Activated T-helper 1 cell treated with anti-CD3 and anti-CD28 coated beads, Interleukin-12 subunit alpha, Interleukin-12 subunit beta, Interleukin-2, Interleukin-4 antibody, amounts not matched to agents 30 ng/mL and 10 ng/mL and 1 ng/mL, durations not matched to agents 14 hours and 24 hours and 36 hours (primary cell): ENCODE measurements at regions of chr1 and their contacts with region 1.

Region 1: GRCh38 chr1:3491291-3492246 is 37.1 kb downstream of the ARHGEF16 start:
- DNase-seq: peak; percentile 70
- H3K4me3 Mint-ChIP-seq: no peak overlapping the region
- H3K27ac Mint-ChIP-seq: no peak overlapping the region
- H3K4me1 Mint-ChIP-seq: no peaks in the 10 kb centered on the region
- H3K27me3 Mint-ChIP-seq: no peaks in the 10 kb centered on the region

Region 2: DNA sequence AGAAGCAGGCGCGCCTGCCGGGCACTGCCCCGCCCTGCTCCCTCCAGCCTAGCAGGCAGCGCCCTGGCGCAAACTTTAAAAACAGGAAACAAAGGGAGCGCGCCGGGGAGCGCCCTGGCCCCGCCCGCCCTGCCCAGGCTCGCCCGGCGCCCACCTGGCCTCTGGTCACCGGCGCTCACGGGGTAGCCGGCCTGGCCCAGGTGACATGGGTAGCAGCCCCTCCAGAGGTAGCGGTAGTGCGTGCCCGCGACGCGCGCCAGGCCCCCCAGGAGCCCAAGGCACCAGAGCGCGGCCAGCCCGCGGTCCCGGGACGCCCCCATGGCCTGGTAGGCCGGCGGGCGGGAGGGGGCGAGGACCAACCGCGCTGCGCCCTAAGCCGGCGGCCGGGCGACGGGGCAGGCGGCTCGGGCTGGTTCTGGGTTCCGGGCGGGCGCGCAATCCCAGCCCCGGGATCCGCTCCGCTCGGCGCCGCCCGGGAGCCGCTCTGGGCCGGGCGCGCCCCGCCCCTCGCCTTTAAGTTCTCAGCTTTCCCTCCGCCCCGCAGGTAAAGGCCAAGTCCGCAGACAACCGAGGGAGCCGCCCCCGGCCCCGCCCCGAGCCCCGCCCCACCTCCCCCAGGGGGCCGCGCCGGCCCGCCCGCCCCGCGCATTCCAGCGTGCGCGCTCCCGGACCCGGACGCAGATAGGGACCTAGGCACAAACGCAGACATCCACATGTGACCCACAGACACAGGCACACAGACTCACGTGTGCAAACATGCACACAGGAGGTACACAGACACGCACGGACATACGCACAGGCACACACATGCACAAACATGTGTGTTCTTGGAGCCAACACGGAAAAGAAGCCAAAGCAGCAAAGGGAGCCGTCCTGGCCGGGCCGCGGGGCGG is 39.6 kb after region 1 on chr1:
- intact Hi-C with region 1: loop called (anchors 2 kb)
- DNase-seq: peak; percentile 63
- H3K4me3 Mint-ChIP-seq: peak overlapping the region; percentile 78
- H3K27ac Mint-ChIP-seq: peak overlapping the region; percentile 87
- H3K4me1 Mint-ChIP-seq: no peaks in the 10 kb centered on the region
- H3K27me3 Mint-ChIP-seq: peaks cover 2% of the 10 kb centered on the region

Region 3: DNA sequence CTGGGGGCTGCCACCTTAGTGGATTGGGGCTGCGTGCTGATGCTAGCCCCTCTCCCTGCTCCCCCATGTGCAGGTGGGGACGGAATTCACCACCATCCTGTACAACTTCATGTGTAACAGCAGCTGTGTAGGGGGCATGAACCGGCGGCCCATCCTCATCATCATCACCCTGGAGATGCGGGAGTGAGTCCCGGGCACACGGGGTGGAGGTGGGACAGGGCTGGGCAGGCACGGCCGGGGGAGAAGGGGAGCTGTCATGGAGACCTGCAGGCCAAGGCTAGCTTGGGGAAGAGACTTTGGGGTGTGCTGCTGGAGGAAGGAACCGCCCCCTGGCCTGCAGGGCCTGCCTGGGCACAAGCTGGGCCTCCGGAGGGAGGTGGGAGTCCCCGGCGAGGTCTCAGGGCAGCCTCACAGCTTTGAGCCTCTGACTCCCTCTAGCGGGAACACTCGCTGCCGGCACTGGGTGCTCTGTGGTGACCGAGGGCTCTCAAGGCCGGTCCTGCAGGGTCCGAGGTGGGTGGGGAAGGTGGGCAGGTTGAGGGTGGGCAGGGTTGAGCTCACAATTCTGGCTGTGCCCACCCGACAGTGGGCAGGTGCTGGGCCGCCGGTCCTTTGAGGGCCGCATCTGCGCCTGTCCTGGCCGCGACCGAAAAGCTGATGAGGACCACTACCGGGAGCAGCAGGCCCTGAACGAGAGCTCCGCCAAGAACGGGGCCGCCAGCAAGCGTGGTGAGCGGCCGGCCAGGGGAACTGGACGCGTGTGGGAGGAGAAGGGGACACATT is 235.7 kb after region 1 on chr1:
- intact Hi-C with region 1: loop called (anchors 1 kb)
- DNase-seq: no peak
- H3K4me3 Mint-ChIP-seq: no peak overlapping the region
- H3K27ac Mint-ChIP-seq: no peak overlapping the region
- H3K4me1 Mint-ChIP-seq: no peaks in the 10 kb centered on the region
- H3K27me3 Mint-ChIP-seq: no peaks in the 10 kb centered on the region